AG04449 (cell line): ENCODE measurements at regions of chr5 and their contacts with region 1.

Region 1: GRCh38 chr5:139574641-139575312 is 13.6 kb downstream of the UBE2D2 start:
- DNase-seq: no peak
- H3K4me3 ChIP-seq: no peak overlapping the region
- CTCF ChIP-seq: peak; percentile 46

Region 2: GRCh38 chr5:139414581-139415130 is 160.1 kb before region 1 on chr5:
- CTCF ChIA-PET with region 1: no interaction called
- POLR2A ChIA-PET with region 1: no interaction called
- DNase-seq: no peak
- H3K4me3 ChIP-seq: no peak overlapping the region
- CTCF ChIP-seq: no peak

Region 3: GRCh38 chr5:139561655-139562451 is 12.9 kb before region 1 on chr5:
- CTCF ChIA-PET with region 1: interaction called, 38 read pairs
- POLR2A ChIA-PET with region 1: interaction called, 6 read pairs
- DNase-seq: no peak
- H3K4me3 ChIP-seq: peak overlapping the region; percentile 68
- CTCF ChIP-seq: no peak

Region 4: GRCh38 chr5:139593716-139594319 is 19.0 kb after region 1 on chr5:
- CTCF ChIA-PET with region 1: interaction called, 17 read pairs
- POLR2A ChIA-PET with region 1: no interaction called
- DNase-seq: no peak
- H3K4me3 ChIP-seq: no peak overlapping the region
- CTCF ChIP-seq: no peak

Region 5: GRCh38 chr5:139684881-139685749 is 110.3 kb after region 1 on chr5:
- CTCF ChIA-PET with region 1: no interaction called
- POLR2A ChIA-PET with region 1: no interaction called
- DNase-seq: no peak
- H3K4me3 ChIP-seq: no peak overlapping the region
- CTCF ChIP-seq: peak; percentile 1